ENCODE measurements at regions of chr16 and their contacts with region 1.

Region 1: DNA sequence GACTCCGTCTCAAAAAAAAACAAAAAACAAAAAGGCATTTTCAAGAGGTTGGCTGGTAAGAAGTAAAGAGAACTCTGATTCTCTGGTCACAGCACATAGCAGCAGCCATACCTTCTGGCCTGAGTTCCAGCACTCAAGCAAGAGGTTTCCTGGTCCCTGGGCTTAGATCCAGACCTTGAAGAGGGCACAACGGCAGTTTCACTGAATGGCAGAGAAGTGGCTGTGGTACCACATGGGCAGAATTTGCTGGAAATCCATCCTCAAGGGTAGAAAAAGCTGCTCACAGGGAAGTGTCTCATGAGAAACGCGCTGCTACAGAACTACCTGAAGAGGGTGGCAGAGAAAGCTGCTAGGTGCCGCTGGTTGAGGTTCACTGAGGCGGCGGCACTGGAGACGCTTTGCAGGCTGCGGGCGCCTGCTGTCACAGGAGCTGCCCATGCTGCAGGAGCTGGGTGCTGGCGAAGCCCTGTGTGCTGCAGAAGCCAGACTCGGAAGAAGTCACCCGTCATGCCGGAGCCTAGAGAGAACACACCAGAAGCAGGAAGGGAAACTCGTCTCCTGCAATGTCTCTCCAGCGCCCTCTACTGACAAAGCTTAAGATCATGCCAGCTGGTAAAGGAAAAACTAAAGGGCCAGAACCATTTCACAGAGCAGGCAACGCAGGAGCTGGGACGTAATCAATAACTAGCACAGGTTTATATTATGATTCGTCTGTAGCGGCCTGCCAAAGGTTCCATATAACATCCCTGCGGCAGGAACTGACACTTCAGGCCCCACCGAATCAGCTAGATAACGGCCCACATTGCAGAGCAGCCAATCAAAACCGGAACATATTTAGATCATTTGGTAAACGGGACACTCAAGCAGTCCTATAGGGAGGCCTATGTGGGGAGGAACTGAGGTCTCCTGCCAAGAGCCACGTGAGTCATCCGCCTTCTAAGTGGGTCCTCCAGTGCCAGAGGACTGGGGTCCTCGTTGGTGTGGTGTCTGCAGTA is 5.4 kb upstream of the ZNF213 start:
- DNase-seq: peak; percentile 61 to 81
- H3K4me3 ChIP-seq: no peak overlapping the region
- H3K27ac ChIP-seq: no peak overlapping the region
- H3K4me1 ChIP-seq: peaks cover 0 to 12% (median 3%) of the 10 kb centered on the region in 4 experiments; a peak in 5 of 7 replicates
- H3K27me3 ChIP-seq: no peaks in the 10 kb centered on the region
- CTCF ChIP-seq: peak; percentile 50 to 92 (median 79)
- EP300 ChIP-seq: no peak
- POLR2A ChIP-seq: peak in 1 of 2 experiments; percentile 69; a peak in 2 of 3 replicates
- RAD21 ChIP-seq: peak; percentile 70 to 76

Region 2: GRCh38 chr16:3029537-3030402 is 99.7 kb before region 1 on chr16:
- CTCF ChIA-PET with region 1: interaction called, 41 read pairs
- POLR2A ChIA-PET with region 1: interaction called, 9 read pairs
- DNase-seq: peak in 1 of 2 experiments; percentile 41
- H3K4me3 ChIP-seq: no peak overlapping the region
- H3K27ac ChIP-seq: no peak overlapping the region
- H3K4me1 ChIP-seq: peaks cover 0 to 8% (median 6%) of the 10 kb centered on the region in 4 experiments; a peak in 5 of 7 replicates
- H3K27me3 ChIP-seq: no peaks in the 10 kb centered on the region
- CTCF ChIP-seq: no peak
- EP300 ChIP-seq: no peak
- POLR2A ChIP-seq: no peak
- RAD21 ChIP-seq: no peak

Region 3: DNA sequence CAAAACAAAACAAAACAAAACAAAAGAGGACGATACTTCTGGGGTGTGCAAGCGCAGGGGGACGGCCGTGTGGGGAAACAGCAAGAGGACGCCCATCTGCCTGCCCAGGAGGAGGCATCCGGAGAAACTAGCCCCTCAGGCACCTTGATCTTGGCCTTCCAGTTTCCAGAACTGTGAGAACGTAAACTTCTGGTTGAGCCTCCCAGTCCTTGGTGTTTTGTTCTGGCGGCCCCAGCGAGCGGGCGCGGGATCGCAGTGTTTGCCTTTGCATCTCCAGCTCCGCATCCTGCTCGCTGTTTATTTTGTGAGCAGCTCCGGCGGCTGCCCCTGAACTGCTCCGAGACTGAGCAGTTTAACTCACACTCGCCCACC is 84.1 kb before region 1 on chr16:
- CTCF ChIA-PET with region 1: interaction called, 17 read pairs
- POLR2A ChIA-PET with region 1: interaction called, 3 read pairs
- DNase-seq: peak in 1 of 2 experiments; percentile 73
- H3K4me3 ChIP-seq: peak overlapping the region; percentile 66 to 89 (median 80)
- H3K27ac ChIP-seq: no peak overlapping the region; the same call in 1 of the 2 replicates
- H3K4me1 ChIP-seq: peaks cover 0 to 3% (median 0%) of the 10 kb centered on the region in 4 experiments; a peak in 3 of 7 replicates
- H3K27me3 ChIP-seq: peaks cover 0 to 8% (median 3%) of the 10 kb centered on the region in 4 experiments; a peak in 6 of 7 replicates
- CTCF ChIP-seq: no peak
- EP300 ChIP-seq: no peak
- POLR2A ChIP-seq: no peak
- RAD21 ChIP-seq: no peak

Region 4: DNA sequence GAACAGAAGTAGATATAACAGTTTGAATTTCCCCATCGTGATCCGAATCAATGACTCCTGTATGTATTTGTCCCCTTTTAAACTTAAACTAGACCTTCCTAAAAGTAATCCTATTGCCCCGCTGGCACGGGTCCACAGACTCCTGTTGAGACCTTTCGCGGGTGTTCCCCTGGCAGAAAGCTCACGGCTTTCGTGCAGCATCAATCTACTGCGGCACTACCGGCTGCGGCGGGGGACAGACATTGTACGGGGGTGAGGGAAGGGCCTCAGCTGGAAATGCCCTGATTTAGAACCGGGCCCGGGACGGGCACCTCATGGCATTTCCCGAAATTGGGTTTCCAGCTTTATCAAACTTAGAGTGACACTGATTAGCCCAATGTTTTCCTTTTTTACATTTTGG is 49.4 kb before region 1 on chr16:
- CTCF ChIA-PET with region 1: interaction called, 13 read pairs
- POLR2A ChIA-PET with region 1: interaction called, 3 read pairs
- DNase-seq: no peak
- H3K4me3 ChIP-seq: no peak overlapping the region
- H3K27ac ChIP-seq: no peak overlapping the region
- H3K4me1 ChIP-seq: no peaks in the 10 kb centered on the region; a peak in 2 of 7 replicates
- H3K27me3 ChIP-seq: no peaks in the 10 kb centered on the region
- CTCF ChIP-seq: no peak
- EP300 ChIP-seq: no peak
- POLR2A ChIP-seq: no peak
- RAD21 ChIP-seq: no peak

Region 5: DNA sequence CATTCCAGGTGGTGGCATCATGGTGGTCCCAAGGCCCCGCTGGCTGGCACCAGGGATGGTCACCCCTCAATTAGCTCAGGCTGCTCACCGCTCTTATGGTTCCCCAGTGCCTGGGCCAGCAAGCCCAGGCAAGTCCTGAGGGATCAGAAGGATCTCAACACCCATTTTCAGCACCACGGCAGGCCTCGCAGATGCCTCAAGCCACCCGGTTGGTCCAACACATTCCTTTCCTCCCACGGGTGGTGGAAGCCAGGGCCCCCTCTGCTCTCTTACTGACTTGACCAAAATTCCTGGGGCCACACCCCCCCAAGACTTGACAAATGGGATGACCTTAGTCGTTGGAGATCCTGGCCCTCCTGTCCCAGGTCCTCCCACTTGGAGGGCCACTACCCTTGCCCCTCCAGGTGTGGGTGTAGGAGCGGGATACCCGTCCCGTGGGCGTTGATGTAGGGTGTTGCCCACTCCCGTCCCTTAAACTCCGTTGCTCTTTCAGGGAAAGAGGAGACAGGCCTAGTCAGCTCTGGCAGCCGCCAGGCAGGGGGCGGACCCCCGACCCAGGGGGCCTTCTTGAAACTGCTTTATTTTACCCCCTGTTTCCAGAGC is 11.1 kb before region 1 on chr16:
- CTCF ChIA-PET with region 1: interaction called, 619 read pairs
- POLR2A ChIA-PET with region 1: interaction called, 51 read pairs
- DNase-seq: no peak
- H3K4me3 ChIP-seq: no peak overlapping the region
- H3K27ac ChIP-seq: no peak overlapping the region
- H3K4me1 ChIP-seq: peaks cover 0 to 8% (median 4%) of the 10 kb centered on the region in 4 experiments; a peak in 5 of 7 replicates
- H3K27me3 ChIP-seq: no peaks in the 10 kb centered on the region
- CTCF ChIP-seq: no peak
- EP300 ChIP-seq: no peak
- POLR2A ChIP-seq: no peak
- RAD21 ChIP-seq: no peak

Region 6: DNA sequence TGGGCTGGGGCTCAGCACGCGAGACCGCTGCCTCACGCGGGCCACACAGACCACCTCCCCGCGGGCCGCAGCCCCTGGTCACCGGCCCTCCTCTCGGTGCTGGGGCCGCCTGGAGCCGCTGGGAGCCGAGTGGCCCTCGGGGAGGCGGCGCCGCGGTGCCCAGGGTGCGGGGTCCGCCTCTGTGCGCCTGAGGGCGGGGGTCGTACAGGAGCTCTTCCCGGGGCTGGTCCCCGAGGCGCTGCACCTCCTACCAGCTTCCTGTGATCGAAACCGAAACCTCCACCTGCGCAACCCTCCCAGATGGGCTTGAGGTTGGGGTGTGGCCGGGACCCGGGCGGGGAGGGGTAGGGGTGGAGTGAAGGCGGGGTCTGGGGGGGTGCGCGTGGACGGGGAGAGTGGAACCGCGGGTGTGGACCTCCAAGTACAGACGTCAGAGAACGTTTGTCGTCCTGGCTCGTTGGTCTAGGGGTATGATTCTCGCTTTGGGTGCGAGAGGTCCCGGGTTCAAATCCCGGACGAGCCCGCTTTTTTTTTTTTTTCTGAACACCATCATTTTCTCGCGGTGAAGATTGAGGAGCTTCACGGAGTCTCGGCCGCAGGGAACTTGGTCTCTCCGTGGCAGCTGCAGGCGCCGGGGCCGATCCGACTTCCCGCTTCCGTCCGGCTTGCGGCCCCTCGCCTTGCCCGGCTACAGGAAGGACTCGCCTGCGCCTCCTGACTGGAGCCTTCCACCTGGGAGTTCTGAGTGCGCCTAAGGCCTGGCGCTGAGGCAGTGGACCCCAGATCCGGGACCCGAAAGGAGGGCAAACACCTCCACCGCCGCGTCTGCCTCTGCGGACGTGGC is 29.3 kb after region 1 on chr16:
- CTCF ChIA-PET with region 1: interaction called, 14 read pairs
- POLR2A ChIA-PET with region 1: interaction called, 3 read pairs
- DNase-seq: peak in 1 of 2 experiments; percentile 84
- H3K4me3 ChIP-seq: peak overlapping the region; percentile 65 to 92 (median 76)
- H3K27ac ChIP-seq: no peak overlapping the region
- H3K4me1 ChIP-seq: peaks cover 0 to 7% (median 4%) of the 10 kb centered on the region in 4 experiments; a peak in 3 of 7 replicates
- H3K27me3 ChIP-seq: peaks cover 0 to 10% (median 7%) of the 10 kb centered on the region in 4 experiments; a peak in 5 of 7 replicates
- CTCF ChIP-seq: no peak
- EP300 ChIP-seq: 0 out of 3 replicates have a peak, but pooled peaks of 1 of the 2 experiments have one; percentile 5
- POLR2A ChIP-seq: 0 out of 3 replicates have a peak, but pooled peaks of 1 of the 2 experiments have one; percentile 18
- RAD21 ChIP-seq: no peak

Region 7: DNA sequence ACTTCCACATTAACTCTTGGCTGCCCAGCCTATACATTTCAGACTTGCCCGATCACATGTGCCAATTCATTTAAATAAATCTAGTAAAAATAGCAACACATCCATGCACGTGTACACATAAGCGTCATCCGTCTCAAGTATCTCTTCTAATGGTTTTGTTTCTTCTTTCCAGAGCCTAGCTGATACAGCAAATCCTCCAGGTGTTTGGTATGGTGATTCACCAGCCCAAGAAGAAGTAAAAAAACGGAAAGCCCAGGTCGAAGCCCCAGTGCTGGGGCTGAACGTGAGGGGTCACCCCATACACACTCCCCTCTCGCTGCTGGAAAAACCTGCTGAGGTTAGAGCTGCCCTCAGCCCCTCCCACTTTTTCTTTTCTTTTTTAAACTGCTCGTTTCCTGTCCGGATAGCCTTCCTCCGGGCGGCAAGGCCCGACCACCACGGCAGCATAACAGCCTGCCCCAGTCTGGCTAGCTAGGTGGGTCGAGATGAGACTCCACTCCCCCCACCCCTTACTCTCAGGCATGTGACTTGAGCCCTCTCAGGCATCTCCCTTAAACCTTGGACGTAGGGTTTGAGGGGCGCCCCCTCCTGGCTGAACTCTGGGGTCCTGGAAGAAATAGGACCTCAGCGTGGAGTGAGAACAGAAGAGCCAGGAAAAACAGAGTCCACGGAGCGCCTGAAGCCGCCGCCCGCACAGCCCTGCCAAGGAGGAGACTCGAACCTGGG is 44.6 kb after region 1 on chr16:
- CTCF ChIA-PET with region 1: interaction called, 18 read pairs
- POLR2A ChIA-PET with region 1: interaction called, 6 read pairs
- DNase-seq: peak in 1 of 2 experiments; percentile 95
- H3K4me3 ChIP-seq: peak overlapping the region; percentile 28 to 71 (median 34); a peak in 5 of 8 replicates
- H3K27ac ChIP-seq: no peak overlapping the region
- H3K4me1 ChIP-seq: peaks cover 0 to 10% (median 6%) of the 10 kb centered on the region in 4 experiments; a peak in 5 of 7 replicates
- H3K27me3 ChIP-seq: peaks cover 0 to 25% (median 15%) of the 10 kb centered on the region in 4 experiments; a peak in 5 of 7 replicates
- CTCF ChIP-seq: peak; percentile 63 to 75 (median 72)
- EP300 ChIP-seq: no peak
- POLR2A ChIP-seq: no peak
- RAD21 ChIP-seq: no peak; a peak in 1 of 4 replicates

Measured in H1 (cell line).